ENCODE measurements at regions of chr14 and their contacts with region 1.

Region 1: DNA sequence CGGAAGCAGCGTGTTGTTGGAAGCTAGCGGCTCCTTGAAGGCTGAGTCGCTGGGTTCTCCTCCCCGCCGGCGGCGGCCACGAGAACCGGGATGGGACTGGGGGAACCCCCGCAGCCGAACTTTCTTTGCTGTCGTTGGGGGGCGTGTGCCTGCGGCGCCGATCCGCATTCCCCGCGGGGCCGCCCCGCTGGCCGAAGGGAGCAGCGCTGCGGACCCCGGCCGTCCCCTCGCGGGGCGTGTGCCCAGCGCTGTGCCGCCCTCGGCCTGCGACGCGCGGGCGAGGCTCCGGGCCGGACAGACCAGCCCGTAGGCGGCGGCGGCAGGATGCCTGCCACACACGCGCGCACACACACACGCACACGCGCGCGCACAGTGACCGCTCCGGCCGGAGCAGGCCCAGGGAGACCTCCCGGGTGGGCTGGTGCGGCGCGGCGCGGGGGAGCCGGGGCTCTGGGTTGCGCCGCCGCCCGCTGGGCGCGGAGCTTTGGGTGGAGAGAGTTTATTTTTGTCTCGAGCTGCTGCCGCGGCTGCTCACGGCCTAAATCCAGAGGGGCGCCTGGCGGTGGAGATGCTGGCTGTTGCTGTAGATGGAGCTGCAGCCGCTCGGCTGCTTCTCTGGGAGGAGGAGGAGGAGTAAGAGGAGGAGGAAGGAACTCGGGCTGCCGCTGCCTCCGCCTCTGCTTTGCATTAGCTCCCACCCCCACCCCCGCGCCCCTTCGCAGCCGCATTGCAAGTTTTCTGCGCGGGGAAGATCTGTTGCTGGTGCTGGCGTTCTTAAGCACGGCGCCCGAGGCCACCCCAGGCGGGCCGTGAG is at the start of gene SAMD4A:
- DNase-seq: no peak
- H3K4me3 ChIP-seq: peak within 1 kb of the TSS; percentile 76
- CTCF ChIP-seq: peak; percentile 47

Region 2: DNA sequence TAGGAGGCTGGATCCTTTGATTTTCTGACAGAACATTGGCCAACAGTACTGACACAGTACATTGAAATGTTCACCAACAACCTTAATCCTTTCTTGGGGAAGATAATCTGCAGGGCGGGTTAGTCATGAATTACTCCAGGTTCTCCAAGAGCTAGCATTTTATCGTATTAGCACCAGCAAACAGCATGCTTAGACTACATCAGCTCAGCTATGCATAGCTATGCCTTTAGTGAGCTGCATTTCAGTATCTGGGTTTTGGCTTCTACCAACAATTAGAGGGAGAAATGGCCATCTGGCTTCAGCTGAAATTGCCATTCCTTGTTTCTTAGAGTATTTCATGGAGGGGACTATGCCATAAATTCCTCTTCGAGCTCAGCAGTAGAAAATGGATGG is 34.1 kb after region 1 on chr14:
- CTCF ChIA-PET with region 1: interaction called, 3 read pairs
- POLR2A ChIA-PET with region 1: interaction called, 28 read pairs
- DNase-seq: peak; percentile 80
- H3K4me3 ChIP-seq: no peak overlapping the region
- CTCF ChIP-seq: no peak

Region 3: GRCh38 chr14:54683882-54684794 is 117.5 kb after region 1 on chr14:
- CTCF ChIA-PET with region 1: interaction called, 168 read pairs
- POLR2A ChIA-PET with region 1: interaction called, 34 read pairs
- DNase-seq: no peak
- H3K4me3 ChIP-seq: peak overlapping the region; percentile 23
- CTCF ChIP-seq: no peak

Region 4: GRCh38 chr14:54730156-54730961 is 163.7 kb after region 1 on chr14:
- CTCF ChIA-PET with region 1: interaction called, 10 read pairs
- POLR2A ChIA-PET with region 1: interaction called, 3 read pairs
- DNase-seq: peak; percentile 38
- H3K4me3 ChIP-seq: peak overlapping the region; percentile 13
- CTCF ChIP-seq: no peak

Region 5: GRCh38 chr14:54796961-54797360 is 230.3 kb after region 1 on chr14:
- CTCF ChIA-PET with region 1: interaction called, 17 read pairs
- POLR2A ChIA-PET with region 1: interaction called, 3 read pairs
- DNase-seq: no peak
- H3K4me3 ChIP-seq: no peak overlapping the region
- CTCF ChIP-seq: no peak